ENCODE measurements at regions of chr18 and their contacts with region 1.

Region 1: GRCh38 chr18:43571078-43571689 is 293.9 kb upstream of the SYT4 start:
- DNase-seq: no peak
- ATAC-seq: peak; percentile 60
- H3K4me3 Mint-ChIP-seq: no peak overlapping the region
- H3K27ac Mint-ChIP-seq: no peak overlapping the region
- H3K4me1 Mint-ChIP-seq: peaks cover 8% of the 10 kb centered on the region
- H3K27me3 Mint-ChIP-seq: no peaks in the 10 kb centered on the region
- CTCF ChIP-seq: peak; percentile 51; the same call in 1 of the 2 replicates

Region 2: GRCh38 chr18:43587538-43588153 is 16.5 kb after region 1 on chr18:
- CTCF ChIA-PET with region 1: interaction called, 75 read pairs
- POLR2A ChIA-PET with region 1: no interaction called
- DNase-seq: no peak
- ATAC-seq: peak; percentile 61
- H3K4me3 Mint-ChIP-seq: no peak overlapping the region
- H3K27ac Mint-ChIP-seq: no peak overlapping the region
- H3K4me1 Mint-ChIP-seq: no peaks in the 10 kb centered on the region
- H3K27me3 Mint-ChIP-seq: no peaks in the 10 kb centered on the region
- CTCF ChIP-seq: peak; percentile 58

Region 3: DNA sequence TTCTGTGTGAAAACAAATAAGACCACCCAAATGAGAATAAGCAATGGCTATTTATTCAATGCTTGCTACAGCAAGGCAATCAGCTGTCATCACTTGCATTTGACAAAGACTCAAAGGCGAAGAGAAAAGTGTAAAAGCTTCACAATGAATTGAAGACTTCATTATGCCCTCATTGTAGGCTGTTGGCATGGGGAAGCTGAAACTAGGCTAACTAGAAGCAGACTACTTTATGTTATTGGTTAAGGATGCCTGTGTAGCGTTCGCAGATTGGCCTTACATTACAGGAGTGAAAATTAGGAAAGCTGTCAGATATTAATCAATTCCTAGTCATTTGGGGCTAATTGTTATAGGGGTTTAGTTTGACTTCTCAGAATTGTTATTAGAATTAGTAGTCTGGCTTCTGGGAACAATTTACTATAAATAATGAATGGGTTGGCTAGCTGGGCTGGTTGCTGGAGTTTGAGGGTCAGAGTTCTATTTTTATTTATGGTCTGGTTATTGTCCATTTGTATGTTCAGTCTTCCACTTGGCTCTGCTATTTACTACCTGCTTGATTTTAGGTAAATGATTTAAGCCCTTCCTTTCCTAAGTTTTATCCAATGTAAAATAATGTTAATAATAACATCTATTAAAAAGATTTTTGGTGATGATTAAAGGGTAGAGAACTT is 143.3 kb after region 1 on chr18:
- CTCF ChIA-PET with region 1: no interaction called
- POLR2A ChIA-PET with region 1: no interaction called
- DNase-seq: no peak
- ATAC-seq: no peak
- H3K4me3 Mint-ChIP-seq: no peak overlapping the region
- H3K27ac Mint-ChIP-seq: no peak overlapping the region
- H3K4me1 Mint-ChIP-seq: peaks cover 7% of the 10 kb centered on the region
- H3K27me3 Mint-ChIP-seq: no peaks in the 10 kb centered on the region; the same call in 1 of the 2 replicates
- CTCF ChIP-seq: no peak

Region 4: GRCh38 chr18:43757273-43757672 is 186.1 kb after region 1 on chr18:
- CTCF ChIA-PET with region 1: no interaction called
- POLR2A ChIA-PET with region 1: no interaction called
- DNase-seq: no peak
- ATAC-seq: no peak
- H3K4me3 Mint-ChIP-seq: no peak overlapping the region
- H3K27ac Mint-ChIP-seq: no peak overlapping the region
- H3K4me1 Mint-ChIP-seq: peaks cover 35% of the 10 kb centered on the region
- H3K27me3 Mint-ChIP-seq: no peaks in the 10 kb centered on the region; the same call in 1 of the 2 replicates
- CTCF ChIP-seq: no peak